Right cardiac atrium (tissue), 5 donors: ENCODE measurements at regions of chr3 and their contacts with region 1.

Region 1: DNA sequence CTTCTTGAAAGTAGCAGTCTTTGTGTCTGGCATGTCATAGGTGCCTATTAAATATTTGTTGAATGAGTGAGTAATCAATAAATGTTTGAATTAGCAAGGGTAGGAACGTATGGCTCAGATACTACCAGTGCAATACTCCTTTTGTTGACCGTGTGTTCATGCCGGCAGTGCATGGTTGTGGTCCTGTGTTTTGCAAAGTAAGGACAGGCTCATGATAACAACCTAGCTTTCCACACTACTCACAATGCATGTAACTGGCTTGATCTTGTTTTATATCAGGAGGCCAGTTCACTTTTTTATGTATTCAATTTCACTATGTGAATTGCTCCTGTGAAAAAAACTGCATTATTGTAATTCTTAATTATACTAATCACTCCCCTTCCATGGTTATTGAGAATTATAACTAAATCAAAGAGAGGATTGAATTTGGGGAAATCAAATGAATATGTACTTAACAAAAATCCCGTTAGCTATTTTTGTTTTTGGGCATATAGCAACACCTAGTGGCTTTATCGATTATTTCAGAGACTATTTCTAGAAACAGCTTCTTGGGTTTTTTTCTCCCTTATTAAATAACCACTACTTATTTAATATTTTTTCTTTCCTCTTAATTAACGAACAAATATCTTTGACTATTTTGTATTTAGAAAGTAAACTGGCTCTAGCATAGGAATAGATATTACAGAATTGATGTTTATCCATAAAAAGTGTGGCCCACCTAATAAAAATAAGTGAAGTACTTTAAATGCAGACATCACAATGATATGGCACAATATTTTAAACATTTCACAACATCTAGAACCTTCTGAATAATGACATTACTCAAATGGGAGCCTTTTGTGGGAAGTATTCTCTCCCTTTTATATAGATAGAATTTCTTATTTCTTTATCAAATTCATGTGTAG is 218.5 kb downstream of the BBX start:
- DNase-seq: no peak
- ATAC-seq: no peak
- H3K4me3 ChIP-seq: no peak overlapping the region
- H3K27ac ChIP-seq: no peak overlapping the region
- H3K4me1 ChIP-seq: no peaks in the 10 kb centered on the region
- H3K27me3 ChIP-seq: no peaks in the 10 kb centered on the region

Region 2: DNA sequence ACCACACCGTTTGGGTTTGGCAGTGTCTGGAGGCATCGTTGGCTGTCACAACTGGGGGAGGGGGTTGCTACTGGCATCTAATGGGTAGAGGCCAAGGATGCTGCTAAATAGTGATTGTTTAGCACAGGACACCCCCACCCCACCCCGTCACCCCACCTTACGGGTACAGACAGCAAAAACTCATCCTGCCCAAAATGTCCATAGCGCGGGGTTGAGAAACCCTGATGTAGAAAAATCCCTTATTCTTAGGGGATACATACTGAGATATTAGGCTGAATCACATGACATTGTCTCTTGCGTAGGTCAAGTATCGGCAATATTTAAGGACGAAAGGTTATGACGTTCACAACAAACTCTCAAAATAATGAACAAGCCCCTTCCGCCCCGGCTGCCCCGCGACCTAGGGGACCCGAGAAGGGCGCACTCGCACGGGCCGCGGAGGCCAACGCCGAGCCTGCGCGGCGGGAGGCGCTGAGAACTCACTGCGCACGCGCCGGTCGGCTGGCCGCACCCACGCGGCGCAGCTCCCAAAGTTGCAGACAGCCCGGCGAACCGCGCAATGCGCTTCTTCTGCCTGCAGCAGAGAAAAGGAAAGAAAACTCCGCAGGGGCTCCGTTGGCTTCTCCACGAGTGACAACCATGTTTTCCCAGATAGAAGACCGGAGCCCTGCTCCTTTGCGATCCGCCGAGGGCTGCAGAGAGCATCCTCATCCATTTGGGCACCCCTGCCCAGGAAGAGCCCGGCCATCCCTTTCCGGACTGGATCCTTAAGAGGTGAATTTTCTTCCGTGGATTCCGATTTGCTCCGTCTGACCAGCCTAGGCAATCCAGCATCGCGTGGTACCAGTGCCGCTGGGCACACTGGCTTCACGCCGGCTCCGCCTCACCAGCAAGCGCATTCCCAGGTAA is 500.8 kb before region 1 on chr3:
- intact Hi-C with region 1: loop called in 1 of 4 experiments (anchors 10 kb)
- DNase-seq: peak; percentile 85 to 93 (median 92)
- ATAC-seq: peak; percentile 97 to 98
- H3K4me3 ChIP-seq: peak overlapping the region; percentile 97
- H3K27ac ChIP-seq: peak overlapping the region; percentile 86
- H3K4me1 ChIP-seq: no peaks in the 10 kb centered on the region
- H3K27me3 ChIP-seq: no peaks in the 10 kb centered on the region

Region 3: DNA sequence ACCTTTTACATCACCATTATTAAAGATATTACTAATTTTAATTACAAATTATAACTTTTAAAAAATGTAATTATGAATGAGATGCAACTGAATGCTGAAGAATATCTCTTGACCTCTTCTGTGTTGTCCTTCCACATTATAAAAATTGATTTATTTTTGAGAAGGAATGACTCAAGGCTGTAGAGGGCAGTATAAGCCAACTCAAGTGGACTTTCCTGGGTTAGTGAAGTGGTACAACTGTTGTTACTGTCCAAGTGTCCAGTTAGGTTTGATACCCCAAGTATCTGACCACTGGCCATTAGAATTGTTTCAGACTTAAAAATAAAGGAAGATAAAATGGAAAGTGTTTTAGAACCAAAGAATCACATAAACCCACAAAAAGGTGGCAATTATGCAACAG is 166.6 kb before region 1 on chr3:
- intact Hi-C with region 1: loop called in 2 of 4 experiments (anchors 5 to 10 kb)
- DNase-seq: no peak
- ATAC-seq: peak; percentile 59 to 78
- H3K4me3 ChIP-seq: no peak overlapping the region
- H3K27ac ChIP-seq: no peak overlapping the region
- H3K4me1 ChIP-seq: peaks cover 4% of the 10 kb centered on the region
- H3K27me3 ChIP-seq: no peaks in the 10 kb centered on the region

Region 4: GRCh38 chr3:107676469-107677309 is 64.6 kb before region 1 on chr3:
- intact Hi-C with region 1: loop called in 2 of 4 experiments (anchors 5 to 10 kb)
- DNase-seq: no peak
- ATAC-seq: peak in 1 of 2 donors; percentile 20
- H3K4me3 ChIP-seq: no peak overlapping the region
- H3K27ac ChIP-seq: no peak overlapping the region
- H3K4me1 ChIP-seq: no peaks in the 10 kb centered on the region
- H3K27me3 ChIP-seq: no peaks in the 10 kb centered on the region

Region 5: GRCh38 chr3:107689355-107689754 is 51.9 kb before region 1 on chr3:
- intact Hi-C with region 1: loop called in 1 of 4 experiments (anchors 5 kb)
- DNase-seq: no peak
- ATAC-seq: no peak
- H3K4me3 ChIP-seq: no peak overlapping the region
- H3K27ac ChIP-seq: no peak overlapping the region
- H3K4me1 ChIP-seq: no peaks in the 10 kb centered on the region
- H3K27me3 ChIP-seq: no peaks in the 10 kb centered on the region